ENCODE measurements at regions of chr12 and their contacts with region 1.

Region 1: DNA sequence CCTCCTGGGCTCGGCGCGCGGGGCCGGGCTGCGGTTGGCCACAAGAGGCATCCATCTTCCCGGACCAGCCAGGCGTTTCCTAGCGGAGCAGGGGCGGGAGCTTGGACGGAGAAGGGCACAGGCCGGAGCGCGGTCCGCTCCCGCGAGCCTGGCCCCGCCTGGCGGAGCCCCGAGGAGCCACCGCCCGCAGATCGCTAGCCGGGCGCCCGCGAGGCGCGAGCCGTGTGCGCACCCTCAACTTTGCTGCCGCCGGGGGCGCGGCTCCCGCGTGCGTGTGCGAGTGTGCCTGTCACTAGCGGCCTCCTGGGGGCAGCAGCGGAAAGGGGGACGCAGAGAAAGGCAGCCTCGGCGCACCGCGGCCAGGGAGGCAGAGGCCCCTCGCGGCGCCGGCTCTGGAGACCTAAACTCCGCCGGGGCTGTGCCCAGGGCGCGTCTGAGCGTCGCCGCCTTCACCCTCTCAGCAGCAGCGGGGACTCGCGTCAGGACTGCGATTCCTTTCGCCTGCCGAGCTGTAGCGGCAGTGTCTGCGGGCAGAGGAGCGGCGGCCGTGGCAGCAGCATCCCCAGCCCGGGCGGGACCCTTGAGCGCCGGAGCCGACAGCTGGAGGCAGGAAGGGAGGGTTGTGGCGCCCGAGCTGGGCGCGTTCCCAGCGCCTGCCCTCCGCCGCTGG is 644 bp upstream of the SRGAP1 start:
- DNase-seq: peak; percentile 84 to 87 (median 86)
- ATAC-seq: peak; percentile 98
- H3K4me3 ChIP-seq: peak overlapping the region; percentile 50
- H3K27ac ChIP-seq: no peak overlapping the region
- H3K4me1 ChIP-seq: peaks cover 6 to 18% of the 10 kb centered on the region in 2 experiments; a peak in 4 of 5 replicates
- H3K27me3 ChIP-seq: peaks cover 25% of the 10 kb centered on the region in 2 experiments; a peak in 4 of 5 replicates
- CTCF ChIP-seq: peak; percentile 84 to 99 (median 96)
- EP300 ChIP-seq: no peak
- POLR2A ChIP-seq: no peak
- RAD21 ChIP-seq: peak; percentile 71 to 86

Region 2: GRCh38 chr12:63802012-63802608 is 41.7 kb before region 1 on chr12:
- CTCF ChIA-PET with region 1: no interaction called
- POLR2A ChIA-PET with region 1: no interaction called
- in situ Hi-C with region 1: no loop called
- intact Hi-C with region 1: no loop called
- DNase-seq: peak in 2 of 4 experiments; percentile 9 to 14
- ATAC-seq: no peak
- H3K4me3 ChIP-seq: no peak overlapping the region
- H3K27ac ChIP-seq: no peak overlapping the region
- H3K4me1 ChIP-seq: no peaks in the 10 kb centered on the region
- H3K27me3 ChIP-seq: no peaks in the 10 kb centered on the region
- CTCF ChIP-seq: peak; percentile 32 to 62 (median 46); a peak in 4 of 6 replicates
- EP300 ChIP-seq: no peak
- POLR2A ChIP-seq: no peak
- RAD21 ChIP-seq: peak; percentile 61 to 63

Region 3: GRCh38 chr12:63955831-63956609 is 112.2 kb after region 1 on chr12:
- CTCF ChIA-PET with region 1: no interaction called
- POLR2A ChIA-PET with region 1: no interaction called
- in situ Hi-C with region 1: no loop called
- intact Hi-C with region 1: loop called (anchors 10 kb)
- DNase-seq: no peak
- ATAC-seq: no peak
- H3K4me3 ChIP-seq: no peak overlapping the region
- H3K27ac ChIP-seq: no peak overlapping the region
- H3K4me1 ChIP-seq: no peaks in the 10 kb centered on the region; a peak in 1 of 5 replicates
- H3K27me3 ChIP-seq: no peaks in the 10 kb centered on the region; a peak in 2 of 5 replicates
- CTCF ChIP-seq: no peak
- EP300 ChIP-seq: no peak
- POLR2A ChIP-seq: no peak
- RAD21 ChIP-seq: no peak

Region 4: DNA sequence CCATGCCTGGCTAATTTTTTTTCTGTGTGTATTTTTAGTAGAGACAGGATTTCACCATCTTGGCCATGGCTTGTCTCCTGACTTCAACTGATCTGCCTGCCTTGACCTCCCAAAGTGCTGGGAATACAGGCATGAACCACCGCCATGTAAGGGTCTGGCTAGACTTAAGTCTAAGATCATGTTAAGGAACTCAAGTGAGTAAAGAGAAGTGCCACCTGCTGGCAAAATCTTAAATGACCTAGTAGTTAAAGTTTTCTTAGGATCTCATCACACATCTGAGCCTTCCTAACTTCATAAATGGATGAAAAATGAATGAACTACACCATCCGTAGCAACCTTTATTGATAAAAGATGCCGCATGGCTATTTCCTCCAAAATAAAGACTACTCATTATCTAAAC is 548.4 kb after region 1 on chr12:
- CTCF ChIA-PET with region 1: no interaction called
- POLR2A ChIA-PET with region 1: no interaction called
- in situ Hi-C with region 1: loop called (anchors 25 kb)
- intact Hi-C with region 1: no loop called
- DNase-seq: peak in 3 of 4 experiments; percentile 35 to 40 (median 36)
- ATAC-seq: peak; percentile 70
- H3K4me3 ChIP-seq: no peak overlapping the region
- H3K27ac ChIP-seq: no peak overlapping the region
- H3K4me1 ChIP-seq: peaks cover 0 to 13% of the 10 kb centered on the region in 2 experiments; a peak in 2 of 5 replicates
- H3K27me3 ChIP-seq: peaks cover 0 to 11% of the 10 kb centered on the region in 2 experiments; a peak in 2 of 5 replicates
- CTCF ChIP-seq: peak in 2 of 3 experiments; percentile 17 to 46; a peak in 4 of 6 replicates
- EP300 ChIP-seq: no peak
- POLR2A ChIP-seq: no peak
- RAD21 ChIP-seq: peak in 1 of 2 experiments; percentile 23; a peak in 1 of 4 replicates